ENCODE measurements at regions of chr20 and their contacts with region 1.

Region 1: DNA sequence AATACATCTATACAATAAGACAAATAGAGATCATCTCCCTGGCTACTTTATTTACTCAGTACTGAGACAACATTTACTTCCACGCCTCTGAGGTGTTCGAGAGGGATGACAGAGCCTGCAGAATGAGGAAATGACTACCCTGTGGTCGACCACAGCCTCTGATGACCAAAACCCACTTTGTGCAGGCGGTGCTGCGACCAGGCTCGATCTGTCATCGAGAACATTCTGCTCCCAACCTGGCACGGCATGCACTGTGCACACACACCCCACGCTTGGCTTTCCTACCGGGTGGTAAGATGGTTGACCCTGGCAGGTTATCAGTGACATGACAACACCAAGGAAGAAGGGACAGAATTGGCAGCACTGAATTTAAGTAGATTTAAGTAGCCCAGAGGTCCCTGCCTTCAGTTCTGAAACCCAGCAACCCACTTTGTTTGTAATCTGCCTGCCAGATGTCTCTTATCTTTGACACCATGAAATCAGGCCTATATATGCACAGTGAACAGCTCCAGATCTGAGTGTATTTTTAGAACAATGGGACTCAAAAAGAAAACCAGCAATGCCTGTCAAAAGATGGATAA is 42.6 kb downstream of the TTI1 start:
- DNase-seq: peak; percentile 69
- H3K4me3 Mint-ChIP-seq: peak overlapping the region; percentile 53
- H3K27ac Mint-ChIP-seq: peak overlapping the region; percentile 83
- H3K4me1 Mint-ChIP-seq: peaks cover 25% of the 10 kb centered on the region
- H3K27me3 Mint-ChIP-seq: no peaks in the 10 kb centered on the region

Region 2: GRCh38 chr20:37615340-37616109 is 375.1 kb before region 1 on chr20:
- intact Hi-C with region 1: loop called (anchors 5 kb)
- DNase-seq: peak; percentile 31
- H3K4me3 Mint-ChIP-seq: no peak overlapping the region
- H3K27ac Mint-ChIP-seq: no peak overlapping the region
- H3K4me1 Mint-ChIP-seq: no peaks in the 10 kb centered on the region
- H3K27me3 Mint-ChIP-seq: peaks cover 6% of the 10 kb centered on the region

Region 3: GRCh38 chr20:37734228-37734985 is 256.3 kb before region 1 on chr20:
- intact Hi-C with region 1: loop called (anchors 10 kb)
- DNase-seq: no peak
- H3K4me3 Mint-ChIP-seq: peak overlapping the region; percentile 36
- H3K27ac Mint-ChIP-seq: peak overlapping the region; percentile 53
- H3K4me1 Mint-ChIP-seq: peaks cover 38% of the 10 kb centered on the region
- H3K27me3 Mint-ChIP-seq: no peaks in the 10 kb centered on the region

Region 4: DNA sequence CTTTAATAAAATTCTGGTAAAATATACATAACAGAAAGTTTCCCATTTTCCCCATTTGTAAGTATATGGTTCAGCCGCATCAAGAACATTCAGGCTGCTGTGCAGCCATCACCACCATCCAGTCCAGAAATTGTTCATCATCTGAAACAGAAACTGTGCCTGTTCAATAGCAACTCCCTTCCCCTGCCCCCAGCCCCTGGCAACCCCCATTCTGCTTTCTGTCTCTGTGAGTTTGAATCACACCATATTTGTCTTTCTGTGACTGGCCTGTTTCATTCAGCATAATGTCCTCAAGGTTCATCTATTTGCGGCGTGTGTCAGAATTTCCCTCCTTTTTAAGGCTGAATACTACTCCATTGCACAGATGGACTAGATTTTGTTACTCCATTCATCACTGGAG is 68.6 kb before region 1 on chr20:
- intact Hi-C with region 1: loop called (anchors 5 kb)
- DNase-seq: no peak
- H3K4me3 Mint-ChIP-seq: no peak overlapping the region
- H3K27ac Mint-ChIP-seq: no peak overlapping the region
- H3K4me1 Mint-ChIP-seq: peaks cover 16% of the 10 kb centered on the region
- H3K27me3 Mint-ChIP-seq: peaks cover 12% of the 10 kb centered on the region

Region 5: DNA sequence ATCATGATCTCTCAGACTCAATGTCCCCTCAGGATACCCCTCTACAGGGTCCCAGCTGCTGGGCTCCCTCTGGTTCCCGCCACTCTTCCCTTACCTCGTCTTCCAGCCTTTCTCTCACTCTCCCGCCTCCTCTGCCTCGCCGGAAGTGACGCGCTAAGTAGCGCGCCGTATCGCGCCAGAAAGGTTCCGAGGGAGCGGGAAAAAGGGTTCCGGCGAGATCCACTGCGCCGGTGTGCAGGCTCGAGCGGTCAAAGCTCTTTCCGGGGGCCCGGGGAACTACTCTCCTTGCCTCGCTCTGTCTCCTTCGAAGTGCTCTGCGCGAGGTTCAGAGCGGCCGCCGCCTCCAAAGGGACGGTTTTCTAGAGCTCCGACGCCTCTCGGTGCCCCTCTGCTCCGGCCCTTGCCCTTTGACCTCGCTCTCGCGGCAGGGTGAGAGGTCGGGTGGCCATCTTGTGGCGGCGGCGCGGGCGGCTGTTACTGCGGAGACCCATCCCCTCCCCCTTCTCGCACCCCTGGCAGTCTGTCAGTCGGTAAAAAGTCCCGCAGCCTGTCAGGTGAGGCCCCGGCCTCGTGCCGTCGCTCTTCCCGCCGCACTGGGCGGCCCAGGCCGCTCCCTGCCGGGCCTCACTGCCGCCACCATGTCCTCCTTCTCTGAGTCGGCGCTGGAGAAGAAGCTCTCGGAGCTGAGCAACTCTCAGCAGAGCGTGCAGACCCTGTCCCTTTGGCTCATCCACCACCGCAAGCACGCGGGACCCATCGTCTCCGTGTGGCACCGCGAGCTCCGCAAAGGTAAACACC is 42.8 kb after region 1 on chr20 and contains the starts of genes RPRD1B and TTI1:
- intact Hi-C with region 1: loop called (anchors 5 kb)
- DNase-seq: peak; percentile 87
- H3K4me3 Mint-ChIP-seq: peak within 1 kb of the TSS; percentile 96
- H3K27ac Mint-ChIP-seq: peak within 1 kb of the TSS; percentile 99
- H3K4me1 Mint-ChIP-seq: peaks cover 72% of the 10 kb centered on the region
- H3K27me3 Mint-ChIP-seq: no peaks in the 10 kb centered on the region
- total RNA-seq, gene RPRD1B: 48.8 and 49.7 TPM in 2 replicates
- total RNA-seq, gene TTI1: 41.7 and 43.1 TPM in 2 replicates

Measured in activated T-helper 1 cell treated with anti-CD3 and anti-CD28 coated beads, Interleukin-12 subunit alpha, Interleukin-12 subunit beta, Interleukin-2, Interleukin-4 antibody, amounts not matched to agents 30 ng/mL and 10 ng/mL and 1 ng/mL, durations not matched to agents 14 hours and 24 hours and 36 hours (primary cell).